ENCODE measurements at regions of chr2 and their contacts with region 1.

Region 1: GRCh38 chr2:176096986-176097819 is 2.4 kb upstream of the HOXD12 start:
- DNase-seq: peak; percentile 74
- ATAC-seq: peak; percentile 84
- H3K4me3 Mint-ChIP-seq: peak overlapping the region; percentile 35
- H3K27ac Mint-ChIP-seq: no peak overlapping the region
- H3K4me1 Mint-ChIP-seq: peaks cover 14% of the 10 kb centered on the region
- H3K27me3 Mint-ChIP-seq: peaks cover 82% of the 10 kb centered on the region
- CTCF ChIP-seq: peak; percentile 85

Region 2: GRCh38 chr2:175366815-175367214 is 730.4 kb before region 1 on chr2:
- CTCF ChIA-PET with region 1: interaction called, 8 read pairs
- POLR2A ChIA-PET with region 1: no interaction called
- intact Hi-C with region 1: loop called (anchors 5 kb)
- DNase-seq: peak; percentile 33
- ATAC-seq: peak; percentile 65
- H3K4me3 Mint-ChIP-seq: no peak overlapping the region
- H3K27ac Mint-ChIP-seq: no peak overlapping the region
- H3K4me1 Mint-ChIP-seq: no peaks in the 10 kb centered on the region
- H3K27me3 Mint-ChIP-seq: peaks cover 6% of the 10 kb centered on the region
- CTCF ChIP-seq: peak; percentile 80

Region 3: DNA sequence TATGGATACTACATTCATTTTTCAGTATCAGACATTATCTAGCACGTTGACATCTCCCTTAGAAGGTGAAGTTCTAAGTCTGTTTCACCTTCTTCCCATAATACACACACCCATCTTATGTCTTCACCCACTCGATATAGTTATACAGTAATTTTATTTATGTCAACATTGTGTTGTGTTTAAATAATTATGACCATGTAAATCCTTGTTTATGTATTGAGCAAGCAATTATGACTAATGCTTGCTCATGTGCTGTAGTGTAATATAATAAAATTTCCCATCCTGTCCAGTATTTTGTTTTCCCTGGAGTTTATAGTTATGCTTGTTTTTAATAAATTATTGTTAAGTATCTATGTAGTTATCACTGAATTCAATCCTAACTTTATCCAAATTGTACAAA is 335.2 kb after region 1 on chr2:
- CTCF ChIA-PET with region 1: no interaction called
- POLR2A ChIA-PET with region 1: no interaction called
- intact Hi-C with region 1: no loop called
- DNase-seq: no peak
- ATAC-seq: no peak
- H3K4me3 Mint-ChIP-seq: no peak overlapping the region
- H3K27ac Mint-ChIP-seq: no peak overlapping the region
- H3K4me1 Mint-ChIP-seq: no peaks in the 10 kb centered on the region
- H3K27me3 Mint-ChIP-seq: peaks cover 18% of the 10 kb centered on the region
- CTCF ChIP-seq: no peak

Measured in activated CD8-positive, alpha-beta T cell treated with anti-CD3 and anti-CD28 coated beads for 36 hours (primary cell).